Spleen (tissue), 13 donors: ENCODE measurements at regions of chr4 and their contacts with region 1.

Region 1: DNA sequence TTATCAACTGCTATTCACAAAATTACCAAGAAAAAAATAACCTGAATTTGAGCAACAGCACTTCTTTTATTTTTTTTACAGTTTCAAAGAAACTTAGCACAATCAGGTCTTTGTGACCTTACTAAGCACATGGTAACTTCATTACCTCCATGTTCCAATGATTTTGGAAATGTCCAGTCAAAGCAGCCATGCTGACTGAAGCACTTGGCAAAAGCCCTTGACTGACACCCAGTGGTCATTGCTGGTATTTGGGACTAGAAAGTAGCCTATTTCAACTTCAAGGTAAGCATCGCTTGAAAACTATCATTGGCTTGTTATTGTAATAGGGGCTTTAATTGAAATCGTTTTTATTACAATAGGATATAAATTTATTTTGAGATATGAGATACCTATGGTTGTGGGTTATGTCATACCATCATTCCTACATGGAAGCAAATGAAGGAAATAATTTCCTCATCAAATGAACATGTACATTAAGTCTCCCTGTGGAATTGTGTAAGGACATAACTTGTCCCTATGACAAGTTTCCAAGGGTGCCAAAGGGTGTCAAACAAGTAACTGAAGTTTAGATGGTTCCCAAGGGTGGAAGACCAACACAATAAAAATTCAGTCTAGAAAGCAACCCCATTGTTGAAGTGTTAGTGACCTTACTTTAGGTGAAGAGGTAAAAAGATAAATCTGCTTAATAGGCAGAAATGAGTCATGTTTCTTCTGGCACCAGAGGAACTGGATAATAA is 15.2 kb upstream of the ANXA10 start:
- DNase-seq: no peak
- H3K4me3 ChIP-seq: no peak overlapping the region
- H3K27ac ChIP-seq: no peak overlapping the region
- H3K4me1 ChIP-seq: no peaks in the 10 kb centered on the region
- H3K27me3 ChIP-seq: no peaks in the 10 kb centered on the region
- CTCF ChIP-seq: peak in 9 of 11 experiments; percentile 23 to 68 (median 52)
- POLR2A ChIP-seq: no peak

Region 2: GRCh38 chr4:166162327-166162726 is 1914.8 kb before region 1 on chr4:
- intact Hi-C with region 1: loop called (anchors 5 kb)
- DNase-seq: no peak
- H3K4me3 ChIP-seq: no peak overlapping the region
- H3K27ac ChIP-seq: no peak overlapping the region
- H3K4me1 ChIP-seq: no peaks in the 10 kb centered on the region
- H3K27me3 ChIP-seq: peaks cover 0 to 4% (median 0%) of the 10 kb centered on the region in 7 donors
- CTCF ChIP-seq: no peak
- POLR2A ChIP-seq: no peak

Region 3: GRCh38 chr4:168353746-168354145 is 276.6 kb after region 1 on chr4:
- intact Hi-C with region 1: no loop called
- DNase-seq: no peak
- H3K4me3 ChIP-seq: no peak overlapping the region
- H3K27ac ChIP-seq: no peak overlapping the region
- H3K4me1 ChIP-seq: no peaks in the 10 kb centered on the region
- H3K27me3 ChIP-seq: no peaks in the 10 kb centered on the region
- CTCF ChIP-seq: no peak
- POLR2A ChIP-seq: no peak